T-cell (primary cell): ENCODE measurements at regions of chr18 and their contacts with region 1.

Region 1: GRCh38 chr18:21740724-21741510 is at the start of gene MIB1:
- DNase-seq: peak in 17 of 35 experiments; percentile 5 to 99 (median 95)
- ATAC-seq: peak; percentile 62 to 68 (median 66)
- H3K4me3 ChIP-seq: peak within 1 kb of the TSS; percentile 87 to 95
- H3K4me3 Mint-ChIP-seq: peak within 1 kb of the TSS; percentile 87 to 94 (median 93)
- H3K27ac ChIP-seq: peak within 1 kb of the TSS; percentile 88
- H3K27ac Mint-ChIP-seq: peak within 1 kb of the TSS; percentile 95 to 97
- H3K4me1 ChIP-seq: peaks cover 8 to 14% of the 10 kb centered on the region in 2 experiments
- H3K4me1 Mint-ChIP-seq: peaks cover 44 to 57% (median 49%) of the 10 kb centered on the region in 3 donors
- H3K27me3 ChIP-seq: no peaks in the 10 kb centered on the region
- H3K27me3 Mint-ChIP-seq: peaks cover 0 to 3% of the 10 kb centered on the region in 2 donors
- total RNA-seq, gene MIB1: 23.5 to 46.1 (median 34.3) TPM

Region 2: DNA sequence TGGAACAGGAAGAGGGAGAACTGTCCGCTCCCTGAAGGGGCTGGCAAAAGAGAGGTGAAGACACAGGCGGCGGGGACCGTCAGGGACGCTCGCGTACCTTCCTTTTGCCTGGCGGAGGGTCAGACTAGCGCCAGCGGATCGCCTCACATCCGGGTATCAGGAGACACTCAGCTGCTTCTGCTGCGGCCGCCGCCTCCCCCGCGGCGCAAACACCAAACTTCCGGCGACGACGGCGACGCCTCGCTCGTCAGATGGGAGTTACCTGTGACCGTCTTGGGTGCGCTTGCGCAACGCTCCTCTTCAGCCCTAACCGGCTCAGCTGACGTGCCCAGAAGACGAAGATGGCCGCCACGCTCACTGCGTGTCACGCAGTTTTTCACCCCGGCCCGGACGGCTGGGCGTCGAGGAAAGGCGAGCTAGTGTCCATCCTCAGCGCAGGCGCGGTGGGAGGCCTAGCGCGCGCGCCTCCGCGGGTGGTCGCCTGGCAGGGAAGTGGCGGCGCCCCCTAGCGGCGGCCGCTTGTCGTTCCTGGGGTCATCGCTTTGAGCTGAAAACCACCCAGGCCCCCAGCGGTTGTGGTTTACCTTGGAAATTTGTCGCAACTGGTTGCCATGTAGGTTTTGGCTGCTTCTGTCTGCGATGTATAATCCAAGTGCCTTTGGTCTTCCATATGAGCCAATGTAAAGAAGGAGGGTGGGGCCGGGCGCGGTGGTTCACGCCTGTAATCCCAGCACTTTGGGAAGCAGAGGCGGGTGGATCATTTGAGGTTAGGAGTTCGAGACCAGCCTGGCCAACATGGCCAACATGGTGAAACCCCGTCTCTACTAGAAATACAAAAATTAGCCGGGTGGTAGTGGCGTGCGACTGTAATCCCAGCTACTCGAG is 140.1 kb before region 1 on chr18 and contains the start of gene ESCO1:
- CTCF ChIA-PET with region 1: interaction called in 1 of 2 experiments, 21 read pairs
- POLR2A ChIA-PET with region 1: interaction called, 7 to 28 read pairs
- DNase-seq: peak; percentile 85 to 98 (median 93)
- ATAC-seq: peak; percentile 88 to 91 (median 88)
- H3K4me3 ChIP-seq: peak within 1 kb of the TSS; percentile 74 to 84
- H3K4me3 Mint-ChIP-seq: peak within 1 kb of the TSS; percentile 93 to 96 (median 95)
- H3K27ac ChIP-seq: peak within 1 kb of the TSS; percentile 90
- H3K27ac Mint-ChIP-seq: peak within 1 kb of the TSS; percentile 99
- H3K4me1 ChIP-seq: peaks cover 15 to 31% of the 10 kb centered on the region in 2 experiments
- H3K4me1 Mint-ChIP-seq: peaks cover 38 to 51% (median 42%) of the 10 kb centered on the region in 3 donors
- H3K27me3 ChIP-seq: no peaks in the 10 kb centered on the region
- H3K27me3 Mint-ChIP-seq: no peaks in the 10 kb centered on the region
- total RNA-seq, gene ESCO1: 24.5 to 32.6 (median 26.2) TPM

Region 3: DNA sequence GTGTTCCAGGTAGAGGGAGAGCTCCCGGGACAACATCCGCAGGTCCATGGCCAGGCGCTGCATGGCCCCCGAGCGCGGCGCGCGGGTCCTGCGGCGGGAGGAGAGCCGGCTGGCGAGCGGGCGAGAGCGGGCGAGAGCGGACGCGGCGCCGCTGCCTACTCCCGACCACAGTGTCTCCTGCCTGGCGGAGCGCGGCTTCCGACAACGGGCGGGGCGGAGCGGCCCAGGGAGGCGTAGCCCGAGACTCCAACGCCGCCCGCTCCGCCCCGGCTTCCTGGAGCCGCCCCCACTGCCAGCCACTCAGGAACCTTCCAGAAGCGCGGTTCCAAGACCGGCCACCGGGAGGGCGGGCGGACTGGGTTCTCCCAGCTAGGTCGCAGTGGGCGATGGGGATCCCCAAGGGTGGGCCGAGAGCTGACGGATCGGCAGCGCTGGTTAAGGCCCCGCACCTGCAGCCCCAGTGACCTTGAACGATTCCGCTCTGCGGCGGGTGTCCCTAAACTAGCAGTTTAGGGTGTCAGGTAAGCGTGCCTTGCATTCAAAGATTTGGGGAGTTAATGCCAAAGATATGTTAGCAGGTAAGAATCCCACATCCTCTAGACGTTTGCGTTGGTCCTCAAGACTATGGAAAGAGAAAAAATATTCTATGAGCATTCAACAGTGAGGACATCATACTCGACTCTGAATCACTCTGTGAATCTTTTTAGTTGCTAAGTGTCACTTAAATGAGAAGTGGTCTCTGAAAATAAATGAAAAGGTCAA is 36.1 kb before region 1 on chr18 and contains the start of gene ABHD3:
- CTCF ChIA-PET with region 1: interaction called in 1 of 2 experiments, 6 read pairs
- POLR2A ChIA-PET with region 1: interaction called, 10 to 13 read pairs
- DNase-seq: peak; percentile 82 to 96 (median 89)
- ATAC-seq: peak; percentile 93 to 98 (median 96)
- H3K4me3 ChIP-seq: peak within 1 kb of the TSS; percentile 84 to 98
- H3K4me3 Mint-ChIP-seq: peak within 1 kb of the TSS; percentile 91 to 97 (median 97)
- H3K27ac ChIP-seq: peak within 1 kb of the TSS; percentile 84
- H3K27ac Mint-ChIP-seq: peak within 1 kb of the TSS; percentile 92 to 95
- H3K4me1 ChIP-seq: peaks cover 3 to 18% of the 10 kb centered on the region in 2 experiments
- H3K4me1 Mint-ChIP-seq: peaks cover 23 to 32% (median 31%) of the 10 kb centered on the region in 3 donors
- H3K27me3 ChIP-seq: no peaks in the 10 kb centered on the region
- H3K27me3 Mint-ChIP-seq: no peaks in the 10 kb centered on the region
- total RNA-seq, gene ABHD3: 33.1 to 42.4 (median 42.1) TPM

Region 4: DNA sequence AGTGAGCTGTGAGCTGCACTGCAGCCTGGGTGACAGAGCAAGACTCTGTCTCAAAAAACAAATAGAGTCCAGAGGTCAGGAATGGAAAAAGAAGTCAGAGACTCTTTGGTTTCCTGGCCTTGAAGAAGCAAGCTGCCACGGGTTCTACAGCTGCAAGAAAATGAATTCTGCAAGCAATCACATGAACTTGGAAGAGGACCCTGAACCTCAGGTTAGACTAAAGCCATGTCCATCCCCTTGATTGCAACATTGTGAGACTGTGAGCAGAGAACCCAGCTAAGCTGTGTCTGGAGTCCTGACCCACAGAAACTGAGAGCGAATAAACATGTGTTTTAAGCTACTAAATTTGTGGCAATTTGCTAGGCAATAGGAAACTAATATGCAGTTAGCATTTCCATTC is 13.2 kb before region 1 on chr18:
- CTCF ChIA-PET with region 1: no interaction called
- POLR2A ChIA-PET with region 1: no interaction called
- DNase-seq: no peak
- ATAC-seq: no peak
- H3K4me3 ChIP-seq: no peak overlapping the region
- H3K4me3 Mint-ChIP-seq: no peak overlapping the region
- H3K27ac ChIP-seq: no peak overlapping the region
- H3K27ac Mint-ChIP-seq: no peak overlapping the region
- H3K4me1 ChIP-seq: no peaks in the 10 kb centered on the region
- H3K4me1 Mint-ChIP-seq: no peaks in the 10 kb centered on the region
- H3K27me3 ChIP-seq: no peaks in the 10 kb centered on the region
- H3K27me3 Mint-ChIP-seq: no peaks in the 10 kb centered on the region

Region 5: GRCh38 chr18:21798126-21798525 is 57.2 kb after region 1 on chr18:
- CTCF ChIA-PET with region 1: interaction called in 1 of 2 experiments, 6 read pairs
- POLR2A ChIA-PET with region 1: interaction called in 1 of 2 experiments, 12 read pairs
- DNase-seq: no peak
- ATAC-seq: no peak
- H3K4me3 ChIP-seq: no peak overlapping the region
- H3K4me3 Mint-ChIP-seq: no peak overlapping the region
- H3K27ac ChIP-seq: no peak overlapping the region
- H3K27ac Mint-ChIP-seq: no peak overlapping the region
- H3K4me1 ChIP-seq: no peaks in the 10 kb centered on the region
- H3K4me1 Mint-ChIP-seq: peaks cover 0 to 2% (median 0%) of the 10 kb centered on the region in 3 donors
- H3K27me3 ChIP-seq: no peaks in the 10 kb centered on the region
- H3K27me3 Mint-ChIP-seq: no peaks in the 10 kb centered on the region

Region 6: DNA sequence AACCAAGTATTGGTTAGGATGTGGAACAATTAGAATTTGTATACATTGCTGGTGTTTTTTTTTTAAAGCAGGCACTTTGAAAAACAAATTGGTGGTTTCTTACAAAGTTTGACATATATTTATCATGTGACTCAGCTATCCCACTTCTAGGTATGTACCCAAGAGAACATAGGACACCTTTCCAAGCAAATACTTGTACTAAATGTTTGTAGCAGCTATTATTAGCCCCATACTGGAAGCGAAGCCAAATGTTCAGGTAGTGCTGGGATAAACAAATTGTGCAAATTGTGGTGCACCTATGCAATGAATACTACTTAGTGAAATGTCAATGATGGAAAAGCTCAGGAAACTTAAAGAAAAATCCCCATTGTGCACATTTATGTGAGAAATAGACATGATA is 100.7 kb after region 1 on chr18:
- CTCF ChIA-PET with region 1: no interaction called
- POLR2A ChIA-PET with region 1: interaction called in 1 of 2 experiments, 10 read pairs
- DNase-seq: no peak
- ATAC-seq: no peak
- H3K4me3 ChIP-seq: no peak overlapping the region
- H3K4me3 Mint-ChIP-seq: no peak overlapping the region
- H3K27ac ChIP-seq: no peak overlapping the region
- H3K27ac Mint-ChIP-seq: no peak overlapping the region
- H3K4me1 ChIP-seq: no peaks in the 10 kb centered on the region
- H3K4me1 Mint-ChIP-seq: no peaks in the 10 kb centered on the region
- H3K27me3 ChIP-seq: no peaks in the 10 kb centered on the region
- H3K27me3 Mint-ChIP-seq: no peaks in the 10 kb centered on the region